Testis (tissue), 5 donors: ENCODE measurements at regions of chr10 and their contacts with region 1.

Region 1: DNA sequence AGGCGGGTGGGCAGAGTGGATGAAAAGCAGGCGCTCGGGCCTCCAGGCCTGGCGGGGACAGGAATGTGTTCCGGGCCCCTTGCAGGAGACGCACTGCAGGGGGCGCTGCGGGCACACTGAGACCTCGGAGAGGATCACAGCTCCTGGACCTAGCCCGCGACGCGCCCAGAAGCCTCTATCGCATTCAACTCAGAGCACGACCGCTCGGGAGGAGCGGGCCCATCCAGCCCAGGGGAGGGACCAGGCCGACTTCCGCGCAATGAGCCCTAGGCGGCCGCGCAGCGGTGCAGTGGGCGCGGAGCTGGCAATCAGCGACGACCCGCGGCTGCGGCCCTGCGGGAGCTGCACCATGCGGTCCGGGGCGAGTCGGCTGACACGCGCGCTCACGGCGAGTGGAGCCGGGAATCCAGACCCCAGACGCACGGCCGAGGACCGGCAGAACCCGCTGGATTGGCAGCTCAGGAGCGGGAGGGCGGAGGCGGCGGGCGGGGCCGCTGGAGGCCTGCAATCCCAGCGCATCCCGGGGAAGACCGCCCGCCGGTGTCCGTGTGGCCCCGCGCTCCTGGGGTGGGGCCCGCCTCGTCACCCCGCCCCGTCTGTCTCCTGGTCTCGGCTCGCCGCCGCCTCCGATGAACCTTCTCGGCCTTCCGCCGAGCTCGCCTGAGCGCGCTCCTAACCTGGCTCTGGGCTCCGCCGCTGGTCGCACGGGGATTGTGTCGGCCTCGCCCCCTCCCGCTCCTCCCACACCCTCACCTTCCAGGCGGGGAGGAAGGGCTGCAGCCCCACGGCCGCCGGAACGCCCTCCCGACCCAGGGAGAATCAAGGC is 33.5 kb upstream of the GRID1 start:
- DNase-seq: peak; percentile 96
- H3K4me3 ChIP-seq: peak overlapping the region; percentile 57 to 58
- H3K27ac ChIP-seq: peak overlapping the region; percentile 69 to 77
- H3K4me1 ChIP-seq: peaks cover 13% of the 10 kb centered on the region
- H3K27me3 ChIP-seq: no peaks in the 10 kb centered on the region
- CTCF ChIP-seq: peak; percentile 88 to 94 (median 91)
- POLR2A ChIP-seq: no peak

Region 2: GRCh38 chr10:86585037-86585725 is 185.1 kb after region 1 on chr10:
- intact Hi-C with region 1: loop called (anchors 10 kb)
- DNase-seq: peak; percentile 70
- H3K4me3 ChIP-seq: no peak overlapping the region
- H3K27ac ChIP-seq: peak overlapping the region in 1 of 2 donors; percentile 71
- H3K4me1 ChIP-seq: peaks cover 20% of the 10 kb centered on the region
- H3K27me3 ChIP-seq: no peaks in the 10 kb centered on the region
- CTCF ChIP-seq: peak; percentile 81 to 92 (median 88)
- POLR2A ChIP-seq: no peak